GM23248 (cell line): ENCODE measurements at regions of chr15 and their contacts with region 1.

Region 1: GRCh38 chr15:98308117-98308516 is 340.2 kb upstream of the IGF1R start:
- DNase-seq: no peak
- H3K4me3 ChIP-seq: no peak overlapping the region
- H3K27ac ChIP-seq: no peak overlapping the region
- H3K4me1 ChIP-seq: no peaks in the 10 kb centered on the region
- H3K27me3 ChIP-seq: no peaks in the 10 kb centered on the region; the same call in 1 of the 2 replicates

Region 2: DNA sequence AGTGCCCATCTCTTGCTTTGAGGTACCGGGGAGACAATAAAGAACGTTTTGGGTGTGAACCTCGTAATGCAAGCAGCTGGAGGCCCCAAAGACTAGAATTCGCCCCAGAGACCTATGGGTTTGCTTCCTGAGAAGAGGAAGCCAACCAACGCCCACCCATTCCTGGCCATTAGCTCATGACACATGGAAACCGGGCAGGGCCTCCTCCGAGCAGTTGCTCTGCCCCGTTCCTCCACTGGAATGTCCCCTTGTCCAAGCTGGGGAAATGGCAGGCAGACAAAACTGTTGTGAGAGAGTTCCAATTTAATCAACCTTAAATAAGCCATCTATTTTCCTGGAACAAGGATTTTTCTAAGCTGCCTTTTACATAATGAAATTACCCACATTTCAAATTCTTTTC is 89.3 kb after region 1 on chr15:
- in situ Hi-C with region 1: no loop called
- DNase-seq: no peak
- H3K4me3 ChIP-seq: no peak overlapping the region
- H3K27ac ChIP-seq: no peak overlapping the region
- H3K4me1 ChIP-seq: no peaks in the 10 kb centered on the region
- H3K27me3 ChIP-seq: no peaks in the 10 kb centered on the region; the same call in 1 of the 2 replicates

Region 3: DNA sequence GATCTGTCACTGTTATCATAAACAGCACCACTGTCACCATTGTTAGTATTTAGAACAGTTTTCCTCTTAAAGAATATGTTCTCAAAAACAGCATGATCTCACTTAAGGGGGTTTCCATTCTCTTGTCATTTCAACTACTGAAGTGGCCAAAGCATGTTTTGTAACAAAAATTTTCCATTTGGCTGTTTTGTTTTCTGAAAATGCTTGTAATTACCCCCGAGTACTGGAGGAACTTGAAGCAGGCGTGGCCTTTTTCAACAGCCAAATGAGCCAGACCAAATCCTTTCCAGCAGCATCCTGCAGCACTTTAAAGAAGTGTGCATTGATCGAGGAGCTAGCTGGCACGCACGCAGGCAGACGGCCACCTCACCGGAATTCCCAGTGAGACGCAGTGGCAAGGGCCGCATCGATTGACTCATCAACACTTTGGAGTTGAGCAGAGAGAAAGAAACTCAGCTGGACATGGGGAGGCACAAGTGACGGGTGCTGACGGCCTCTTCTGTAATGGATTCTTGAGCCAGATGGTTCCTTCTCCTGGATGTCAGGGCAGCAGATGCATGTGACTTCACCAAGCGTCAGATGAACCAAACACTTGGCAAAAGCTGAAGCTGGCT is 105.9 kb after region 1 on chr15:
- in situ Hi-C with region 1: loop called (anchors 10 kb)
- DNase-seq: peak; percentile 27
- H3K4me3 ChIP-seq: no peak overlapping the region
- H3K27ac ChIP-seq: no peak overlapping the region
- H3K4me1 ChIP-seq: no peaks in the 10 kb centered on the region
- H3K27me3 ChIP-seq: peaks cover 5% of the 10 kb centered on the region; the same call in 1 of the 2 replicates